ENCODE measurements at regions of chr10 and their contacts with region 1.

Region 1: GRCh38 chr10:99560277-99561126 is 27.8 kb downstream of the NKX2-3 start:
- DNase-seq: peak; percentile 67
- H3K27ac ChIP-seq: no peak overlapping the region
- CTCF ChIP-seq: peak; percentile 73

Region 2: DNA sequence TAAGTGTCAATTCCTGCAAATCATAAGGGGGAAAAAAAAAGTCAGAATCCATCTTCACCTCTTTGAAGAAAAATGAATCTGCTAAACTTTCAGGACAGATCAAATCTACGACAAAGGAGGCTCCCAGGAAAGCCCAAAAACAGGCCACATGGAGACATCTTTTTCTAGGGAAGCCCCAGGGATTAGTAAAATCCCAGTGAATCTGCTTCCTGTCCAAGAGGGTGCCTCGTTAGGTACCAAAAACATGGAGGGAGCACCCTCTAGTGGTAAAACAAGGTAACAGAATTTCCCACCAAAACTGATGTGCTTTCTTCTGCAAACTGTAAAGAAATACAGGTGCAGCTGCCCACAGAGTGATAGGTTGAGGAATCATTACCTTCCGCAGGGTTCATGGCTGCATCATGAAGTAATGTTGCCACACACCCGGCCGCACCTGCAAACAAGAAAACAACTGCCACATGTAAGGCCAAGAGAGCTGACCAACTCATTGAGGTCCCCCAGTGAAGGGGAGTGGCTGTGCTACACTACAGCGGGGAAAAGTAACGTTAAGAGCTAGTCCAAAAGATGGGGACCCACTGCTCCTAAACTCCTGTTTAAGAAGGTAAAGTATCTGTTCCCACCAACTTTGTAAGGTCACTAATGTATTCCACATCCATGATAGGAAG is 51.8 kb after region 1 on chr10:
- CTCF ChIA-PET with region 1: interaction called, 17 read pairs
- POLR2A ChIA-PET with region 1: no interaction called
- DNase-seq: peak; percentile 72
- H3K27ac ChIP-seq: no peak overlapping the region; the same call in 1 of the 2 replicates
- CTCF ChIP-seq: peak; percentile 82

Region 3: GRCh38 chr10:100739516-100740368 is 1179.2 kb after region 1 on chr10:
- CTCF ChIA-PET with region 1: no interaction called
- POLR2A ChIA-PET with region 1: no interaction called
- DNase-seq: no peak
- H3K27ac ChIP-seq: no peak overlapping the region
- CTCF ChIP-seq: no peak

Measured in RWPE1 (cell line).